ENCODE measurements at regions of chr6 and their contacts with region 1.

Region 1: GRCh38 chr6:100880853-100881706 is at the start of gene ASCC3:
- DNase-seq: peak; percentile 95
- ATAC-seq: peak; percentile 95
- H3K4me3 Mint-ChIP-seq: peak within 1 kb of the TSS; percentile 100
- H3K27ac Mint-ChIP-seq: peak within 1 kb of the TSS; percentile 100
- H3K4me1 Mint-ChIP-seq: peaks cover 37% of the 10 kb centered on the region
- H3K27me3 Mint-ChIP-seq: no peaks in the 10 kb centered on the region
- CTCF ChIP-seq: no peak
- total RNA-seq, gene ASCC3: 50.2 to 50.5 TPM

Region 2: DNA sequence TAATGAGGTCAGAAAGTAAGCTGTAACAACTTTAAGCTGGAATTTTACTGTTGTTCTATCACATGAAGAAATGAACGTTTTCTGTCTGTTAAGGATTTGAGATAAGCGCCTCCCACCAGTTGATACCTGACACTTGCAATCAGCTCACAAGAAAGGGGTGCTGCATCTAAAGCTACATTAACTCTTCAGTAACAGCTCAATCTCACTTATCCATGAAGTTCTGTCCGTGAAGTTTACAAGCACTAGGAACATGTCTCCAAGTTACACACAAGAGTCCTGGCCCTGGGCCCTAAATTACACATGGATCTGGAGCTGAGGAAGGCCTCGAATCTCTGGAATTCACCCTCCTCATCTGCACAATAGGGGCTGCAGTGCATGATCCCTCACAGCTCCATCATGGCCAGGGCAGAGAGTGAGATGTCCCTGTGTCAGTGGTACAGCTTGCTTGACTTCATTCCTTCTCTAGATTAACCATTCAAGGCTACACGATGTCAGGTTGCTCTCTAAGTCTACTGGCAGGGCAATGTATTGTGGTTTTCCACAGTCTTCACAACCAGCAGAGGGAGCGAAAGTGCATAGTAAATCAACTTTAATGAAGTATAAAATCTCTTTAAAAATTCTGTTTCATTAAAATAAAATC is 704.6 kb before region 1 on chr6:
- CTCF ChIA-PET with region 1: no interaction called
- POLR2A ChIA-PET with region 1: no interaction called
- intact Hi-C with region 1: no loop called
- DNase-seq: no peak
- ATAC-seq: no peak
- H3K4me3 Mint-ChIP-seq: no peak overlapping the region
- H3K27ac Mint-ChIP-seq: no peak overlapping the region
- H3K4me1 Mint-ChIP-seq: no peaks in the 10 kb centered on the region
- H3K27me3 Mint-ChIP-seq: peaks cover 5% of the 10 kb centered on the region
- CTCF ChIP-seq: no peak

Region 3: GRCh38 chr6:100865525-100865924 is 15.6 kb before region 1 on chr6:
- CTCF ChIA-PET with region 1: no interaction called
- POLR2A ChIA-PET with region 1: interaction called, 10 read pairs
- intact Hi-C with region 1: no loop called
- DNase-seq: no peak
- ATAC-seq: no peak
- H3K4me3 Mint-ChIP-seq: no peak overlapping the region
- H3K27ac Mint-ChIP-seq: no peak overlapping the region
- H3K4me1 Mint-ChIP-seq: peaks cover 6% of the 10 kb centered on the region
- H3K27me3 Mint-ChIP-seq: no peaks in the 10 kb centered on the region
- CTCF ChIP-seq: no peak

Measured in activated CD8-positive, alpha-beta T cell treated with anti-CD3 and anti-CD28 coated beads for 36 hours (primary cell).